ENCODE measurements at regions of chr14 and their contacts with region 1.

Region 1: DNA sequence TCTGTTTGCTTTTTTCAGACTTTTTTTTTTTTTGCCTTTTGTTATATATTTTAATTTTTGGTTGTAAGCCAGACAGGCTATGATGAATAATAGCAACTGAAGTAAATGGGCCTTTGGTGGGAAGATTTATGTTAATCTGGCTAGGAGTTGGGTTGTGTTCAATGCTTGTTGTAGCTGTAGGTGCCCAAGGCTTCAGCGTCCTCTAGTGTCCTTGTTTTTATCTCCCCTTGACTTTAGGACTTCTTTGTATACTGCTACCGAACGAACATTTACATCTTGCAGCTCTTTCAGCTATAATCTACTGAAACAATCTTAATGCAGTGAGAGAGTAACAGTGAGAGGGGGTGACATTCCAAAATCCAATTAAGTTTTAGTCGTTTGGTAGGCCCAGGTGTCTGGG is 848.4 kb upstream of the FBXO33 start:
- DNase-seq: no peak
- ATAC-seq: no peak
- H3K4me3 ChIP-seq: no peak overlapping the region
- H3K27ac ChIP-seq: no peak overlapping the region
- H3K4me1 ChIP-seq: no peaks in the 10 kb centered on the region
- H3K27me3 ChIP-seq: no peaks in the 10 kb centered on the region
- CTCF ChIP-seq: no peak; a peak in 1 of 6 replicates
- EP300 ChIP-seq: no peak
- POLR2A ChIP-seq: no peak
- RAD21 ChIP-seq: peak; percentile 32; the same call in 1 of the 2 replicates

Region 2: GRCh38 chr14:40164083-40164482 is 116.6 kb before region 1 on chr14:
- CTCF ChIA-PET with region 1: no interaction called
- POLR2A ChIA-PET with region 1: no interaction called
- RAD21 ChIA-PET with region 1: no interaction called
- SMC1A ChIA-PET with region 1: no interaction called
- in situ Hi-C with region 1: no loop called
- intact Hi-C with region 1: no loop called
- DNase-seq: no peak
- ATAC-seq: no peak
- H3K4me3 ChIP-seq: no peak overlapping the region
- H3K27ac ChIP-seq: no peak overlapping the region
- H3K4me1 ChIP-seq: no peaks in the 10 kb centered on the region
- H3K27me3 ChIP-seq: no peaks in the 10 kb centered on the region
- CTCF ChIP-seq: no peak
- EP300 ChIP-seq: no peak
- POLR2A ChIP-seq: no peak
- RAD21 ChIP-seq: no peak

Region 3: DNA sequence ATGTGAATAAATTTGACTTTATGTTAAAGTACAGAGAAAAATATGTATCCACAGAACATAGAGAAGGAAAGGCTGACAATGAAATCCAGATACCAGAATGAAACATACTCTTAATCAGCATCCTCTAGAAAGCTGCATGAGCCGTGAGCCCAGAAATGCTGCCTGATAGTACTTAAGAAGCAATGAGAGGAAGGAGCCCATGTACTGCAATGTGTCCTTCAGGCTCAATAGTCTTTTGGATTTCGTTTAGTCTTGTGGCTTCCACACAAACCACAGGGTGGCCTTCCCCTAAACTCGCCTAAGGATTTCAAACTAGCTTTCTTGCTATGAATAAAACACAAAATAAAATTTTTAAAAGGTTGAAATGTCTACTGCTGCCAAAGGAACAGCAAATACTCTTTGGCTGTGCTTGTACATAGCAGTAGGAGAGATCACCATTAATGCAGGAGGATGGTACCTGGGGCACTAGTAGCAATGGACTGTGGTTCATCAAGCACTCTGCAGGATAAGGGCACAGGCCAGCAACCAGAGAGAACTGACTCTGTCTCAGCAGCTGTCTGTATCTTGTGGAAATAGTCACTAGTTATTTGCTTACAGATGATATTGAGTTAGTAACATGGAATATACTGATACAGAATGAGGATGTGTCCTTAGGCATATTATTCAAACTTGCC is 337.7 kb after region 1 on chr14:
- CTCF ChIA-PET with region 1: no interaction called
- POLR2A ChIA-PET with region 1: no interaction called
- RAD21 ChIA-PET with region 1: no interaction called
- SMC1A ChIA-PET with region 1: no interaction called
- in situ Hi-C with region 1: no loop called
- intact Hi-C with region 1: loop called (anchors 10 kb)
- DNase-seq: no peak
- ATAC-seq: no peak
- H3K4me3 ChIP-seq: no peak overlapping the region
- H3K27ac ChIP-seq: no peak overlapping the region
- H3K4me1 ChIP-seq: no peaks in the 10 kb centered on the region
- H3K27me3 ChIP-seq: no peaks in the 10 kb centered on the region
- CTCF ChIP-seq: no peak
- EP300 ChIP-seq: no peak
- POLR2A ChIP-seq: no peak
- RAD21 ChIP-seq: no peak

Measured in GM12878 (cell line).